ENCODE measurements at regions of chr12 and their contacts with region 1.

Region 1: GRCh38 chr12:124609041-124609995 is 41.9 kb upstream of the NCOR2 start:
- DNase-seq: peak; percentile 25

Region 2: DNA sequence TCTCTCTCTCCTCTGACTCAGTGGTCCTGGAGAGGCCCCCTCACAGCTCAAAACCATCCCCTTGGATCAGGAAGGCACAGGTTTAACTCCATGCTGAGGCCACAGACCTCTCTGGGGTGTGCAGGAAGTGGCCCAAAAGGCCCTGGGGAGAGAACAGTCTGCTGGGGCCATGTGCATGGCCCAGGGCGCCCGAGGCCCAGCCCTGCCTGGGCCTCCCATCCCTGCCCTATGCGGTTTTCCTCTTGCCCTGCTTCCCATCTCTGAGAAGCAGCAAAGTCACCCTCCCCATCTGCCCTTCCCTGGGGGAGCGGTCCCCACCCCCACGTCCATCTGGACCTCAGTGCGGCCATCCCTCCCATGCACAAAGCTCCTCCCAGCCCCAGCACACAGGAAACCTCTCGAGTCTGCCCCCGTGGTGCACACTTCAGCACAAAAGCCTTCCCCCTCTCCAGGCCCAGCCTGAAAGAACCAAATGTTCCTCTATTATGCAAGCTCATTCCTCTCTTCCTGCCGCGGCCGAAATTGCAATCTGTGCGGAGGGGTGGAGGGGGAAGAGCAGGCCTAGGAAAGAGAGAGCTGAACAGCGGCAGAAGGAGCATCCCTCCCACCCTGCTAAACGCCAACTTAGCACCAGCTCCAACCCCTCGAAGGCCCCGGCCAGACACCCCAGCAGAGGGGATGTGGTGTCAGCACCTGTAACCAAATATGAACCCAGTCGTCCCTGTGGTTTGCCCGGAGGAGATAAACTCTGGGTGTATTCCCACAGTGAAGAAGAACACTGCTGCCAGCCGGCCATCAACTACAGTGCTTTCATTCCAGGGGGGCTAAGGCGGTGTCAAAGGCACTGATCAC is 145.9 kb after region 1 on chr12:
- in situ Hi-C with region 1: loop called (anchors 10 kb)
- DNase-seq: peak; percentile 98